PC-3 (cell line): ENCODE measurements at regions of chr10 and their contacts with region 1.

Region 1: DNA sequence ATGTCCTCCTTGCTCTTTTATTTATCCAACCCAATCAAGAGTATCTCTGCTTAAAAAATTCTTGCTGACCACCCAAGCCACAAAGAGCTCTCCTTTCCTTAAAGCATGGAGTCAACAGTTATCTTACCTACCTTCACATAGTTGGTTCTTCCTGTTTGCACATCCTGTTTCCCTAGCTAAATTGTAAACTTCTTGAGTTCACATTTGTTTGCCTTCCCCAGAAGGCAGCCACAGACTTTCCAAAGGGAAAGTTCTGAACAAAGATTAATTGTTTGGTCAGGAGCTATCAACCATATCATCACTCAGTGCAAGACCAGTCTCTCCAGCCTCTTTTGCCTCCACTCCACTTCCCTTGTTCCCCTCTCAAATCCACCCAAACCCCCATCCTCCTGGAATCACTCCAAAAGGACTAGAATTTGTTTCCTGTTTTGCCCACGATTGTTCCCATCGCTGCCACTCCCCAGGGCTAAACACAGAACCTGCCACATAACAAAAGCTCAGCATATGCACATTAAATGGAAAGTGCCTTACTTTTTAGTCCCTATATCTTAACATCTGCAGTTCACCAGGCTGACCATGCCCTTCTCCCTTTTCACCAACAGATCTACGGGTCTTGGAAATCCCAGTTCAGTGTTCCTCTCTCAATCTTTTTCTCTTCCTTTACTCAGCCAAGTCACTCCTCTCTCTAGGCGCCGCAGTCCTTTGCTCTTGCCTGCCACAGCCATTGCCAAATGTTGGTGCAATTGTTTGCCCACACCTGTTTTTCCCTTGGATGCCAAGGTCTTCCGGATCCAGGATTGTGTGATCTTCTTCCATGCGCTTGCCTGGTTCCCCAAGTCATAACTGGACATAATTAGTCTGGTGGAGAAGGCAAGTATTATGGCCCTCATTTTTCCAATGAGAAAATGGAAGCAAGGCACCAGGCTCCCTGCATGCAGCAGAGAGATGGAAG is 265.5 kb downstream of the KCNMA1 start:
- DNase-seq: peak; percentile 88
- ATAC-seq: peak; percentile 79
- H3K4me3 ChIP-seq: no peak overlapping the region
- H3K27ac ChIP-seq: peak overlapping the region; percentile 73
- H3K4me1 ChIP-seq: peaks cover 17% of the 10 kb centered on the region
- H3K27me3 ChIP-seq: no peaks in the 10 kb centered on the region
- CTCF ChIP-seq: no peak

Region 2: GRCh38 chr10:77305650-77306632 is 66.2 kb before region 1 on chr10:
- CTCF ChIA-PET with region 1: no interaction called
- POLR2A ChIA-PET with region 1: no interaction called
- intact Hi-C with region 1: no loop called
- DNase-seq: peak; percentile 98
- ATAC-seq: peak; percentile 83
- H3K4me3 ChIP-seq: peak overlapping the region; percentile 2; the same call in 1 of the 2 replicates
- H3K27ac ChIP-seq: peak overlapping the region; percentile 32
- H3K4me1 ChIP-seq: peaks cover 34% of the 10 kb centered on the region
- H3K27me3 ChIP-seq: no peaks in the 10 kb centered on the region
- CTCF ChIP-seq: no peak

Region 3: GRCh38 chr10:77355844-77356243 is 16.3 kb before region 1 on chr10:
- CTCF ChIA-PET with region 1: no interaction called
- POLR2A ChIA-PET with region 1: interaction called, 14 read pairs
- intact Hi-C with region 1: no loop called
- DNase-seq: peak; percentile 100
- ATAC-seq: peak; percentile 83
- H3K4me3 ChIP-seq: no peak overlapping the region
- H3K27ac ChIP-seq: peak overlapping the region; percentile 86
- H3K4me1 ChIP-seq: peaks cover 60% of the 10 kb centered on the region
- H3K27me3 ChIP-seq: no peaks in the 10 kb centered on the region
- CTCF ChIP-seq: no peak

Region 4: DNA sequence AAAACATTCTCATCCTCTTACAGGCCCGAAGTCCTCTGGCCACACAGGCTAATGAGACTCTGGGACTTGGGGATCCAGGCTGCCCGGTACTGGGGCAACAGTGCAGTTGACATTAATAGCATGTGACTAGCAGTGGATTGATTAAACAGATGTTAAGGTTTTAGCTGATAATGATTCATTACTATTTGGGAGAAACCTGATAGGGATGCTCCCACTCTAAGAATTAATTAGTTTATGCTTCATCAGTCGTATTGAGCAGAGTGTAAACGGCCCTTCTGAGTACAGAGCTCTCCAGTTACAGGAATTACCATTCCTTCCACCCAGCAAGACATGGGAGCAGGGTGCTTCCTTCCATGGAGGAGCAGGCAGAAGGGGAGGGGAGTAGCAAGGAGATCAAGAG is 744.2 kb after region 1 on chr10:
- CTCF ChIA-PET with region 1: no interaction called
- POLR2A ChIA-PET with region 1: no interaction called
- intact Hi-C with region 1: no loop called
- DNase-seq: no peak
- ATAC-seq: no peak
- H3K4me3 ChIP-seq: no peak overlapping the region
- H3K27ac ChIP-seq: no peak overlapping the region
- H3K4me1 ChIP-seq: no peaks in the 10 kb centered on the region
- H3K27me3 ChIP-seq: peaks cover 90% of the 10 kb centered on the region
- CTCF ChIP-seq: no peak